Activated CD8-positive, alpha-beta T cell treated with anti-CD3 and anti-CD28 coated beads, Interleukin-2, amount 10 ng/mL, durations not matched to agents 7 days and 5 days (primary cell): ENCODE measurements at regions of chr12 and their contacts with region 1.

Region 1: DNA sequence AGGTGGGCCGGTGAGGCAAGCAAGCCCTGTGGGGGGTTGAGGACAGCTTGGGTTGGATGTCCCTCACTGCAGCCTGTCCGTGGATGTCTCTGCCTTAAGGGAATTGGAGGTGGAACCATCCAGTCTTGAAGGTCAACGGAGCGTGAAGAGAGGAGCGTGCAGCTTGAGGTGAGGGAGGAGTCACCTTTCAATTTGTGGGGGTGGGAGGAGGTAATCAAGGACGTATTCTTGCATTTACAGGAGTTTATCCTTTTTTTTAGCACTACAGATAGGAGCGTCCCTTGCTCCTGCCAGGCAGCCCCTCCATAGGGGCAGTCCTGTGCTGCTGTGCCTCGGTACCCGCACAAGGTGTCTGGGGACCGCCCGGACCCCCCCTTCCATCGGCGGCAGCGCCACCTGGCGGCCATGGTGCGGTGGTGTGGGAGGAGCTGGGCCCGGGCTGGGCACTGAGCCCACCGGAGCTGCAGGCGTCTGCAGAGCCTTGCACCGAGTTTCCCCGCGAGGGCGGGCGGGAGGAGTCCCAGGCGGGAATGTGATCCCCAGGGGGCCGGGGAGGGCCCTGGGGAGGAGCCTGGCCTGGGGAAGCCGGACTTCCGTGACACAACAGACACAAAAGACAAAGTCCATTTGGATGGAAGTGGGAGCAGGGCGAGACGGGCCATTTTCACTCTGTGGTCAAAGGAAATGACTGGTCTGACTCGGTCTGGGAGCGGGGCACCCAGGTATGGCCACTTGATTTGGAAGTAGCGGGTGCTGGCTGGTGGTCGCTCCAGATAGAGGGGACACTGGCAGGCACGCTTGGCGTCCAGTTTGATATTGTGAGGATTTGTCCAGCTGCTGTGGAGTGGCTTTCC is 923 bp downstream of the DNAJC22 start:
- DNase-seq: peak; percentile 81
- ATAC-seq: peak; percentile 87
- H3K4me3 Mint-ChIP-seq: peak overlapping the region; percentile 60
- H3K27ac Mint-ChIP-seq: no peak overlapping the region
- H3K4me1 Mint-ChIP-seq: peaks cover 36% of the 10 kb centered on the region
- H3K27me3 Mint-ChIP-seq: peaks cover 71% of the 10 kb centered on the region

Region 2: DNA sequence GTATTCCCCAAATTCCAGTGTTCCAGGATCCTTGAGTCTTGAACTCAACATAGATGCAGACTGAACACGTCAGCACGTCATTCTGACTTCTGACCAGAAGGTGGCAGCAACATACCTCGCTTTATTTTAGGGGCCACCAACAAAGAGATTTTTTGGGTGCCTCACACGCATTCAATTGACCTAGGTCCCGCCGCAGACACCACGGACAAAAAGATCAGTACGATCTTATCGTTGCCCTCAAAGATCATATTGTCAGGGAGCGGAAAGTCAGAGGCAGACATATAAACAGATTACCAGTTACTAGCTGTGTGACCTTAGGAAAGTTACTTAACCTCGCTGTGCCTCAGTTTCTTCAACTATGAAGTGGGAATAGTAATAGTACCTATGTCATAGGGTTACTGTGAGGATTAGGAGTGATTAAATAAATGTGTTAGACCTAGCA is 59.2 kb before region 1 on chr12:
- CTCF ChIA-PET with region 1: interaction called, 111 read pairs
- POLR2A ChIA-PET with region 1: no interaction called
- DNase-seq: peak; percentile 82
- ATAC-seq: peak; percentile 59
- H3K4me3 Mint-ChIP-seq: no peak overlapping the region
- H3K27ac Mint-ChIP-seq: no peak overlapping the region
- H3K4me1 Mint-ChIP-seq: peaks cover 5% of the 10 kb centered on the region
- H3K27me3 Mint-ChIP-seq: peaks cover 18% of the 10 kb centered on the region

Region 3: DNA sequence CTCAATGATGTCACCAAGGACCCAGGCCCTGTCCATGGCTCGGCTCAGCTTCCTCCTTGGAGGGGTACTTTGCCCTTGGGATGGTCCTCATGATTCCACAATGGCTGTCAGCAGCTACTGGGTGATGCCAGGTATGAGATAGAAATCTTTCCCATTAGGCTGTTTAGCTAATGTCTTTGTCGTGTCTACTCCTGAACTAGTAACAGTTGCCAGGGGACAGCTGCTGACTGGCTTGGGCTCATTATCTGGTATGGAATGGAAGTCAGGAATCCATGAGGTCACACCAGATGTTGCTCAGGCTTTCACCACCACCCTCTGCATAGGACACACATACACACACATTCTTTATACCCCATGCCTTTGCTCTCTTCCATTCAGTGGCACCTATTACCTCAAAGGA is 43.5 kb before region 1 on chr12:
- CTCF ChIA-PET with region 1: interaction called, 67 read pairs
- POLR2A ChIA-PET with region 1: no interaction called
- DNase-seq: no peak
- ATAC-seq: no peak
- H3K4me3 Mint-ChIP-seq: no peak overlapping the region
- H3K27ac Mint-ChIP-seq: no peak overlapping the region
- H3K4me1 Mint-ChIP-seq: peaks cover 5% of the 10 kb centered on the region
- H3K27me3 Mint-ChIP-seq: peaks cover 41% of the 10 kb centered on the region

Region 4: GRCh38 chr12:49322708-49323523 is 24.7 kb before region 1 on chr12 and contains the start of gene TROAP:
- CTCF ChIA-PET with region 1: interaction called, 43 read pairs
- POLR2A ChIA-PET with region 1: interaction called, 12 read pairs
- DNase-seq: peak; percentile 99
- ATAC-seq: peak; percentile 99
- H3K4me3 Mint-ChIP-seq: peak within 1 kb of the TSS; percentile 100
- H3K27ac Mint-ChIP-seq: peak within 1 kb of the TSS; percentile 99
- H3K4me1 Mint-ChIP-seq: peaks cover 32% of the 10 kb centered on the region
- H3K27me3 Mint-ChIP-seq: peaks cover 2% of the 10 kb centered on the region
- total RNA-seq, gene TROAP: 107 to 111 TPM

Region 5: GRCh38 chr12:49336645-49337584 is 10.7 kb before region 1 on chr12 and contains the start of gene C1QL4:
- CTCF ChIA-PET with region 1: interaction called, 37 read pairs
- POLR2A ChIA-PET with region 1: no interaction called
- DNase-seq: peak; percentile 88
- ATAC-seq: peak; percentile 81
- H3K4me3 Mint-ChIP-seq: peak within 1 kb of the TSS; percentile 53
- H3K27ac Mint-ChIP-seq: no peak within 1 kb of the TSS
- H3K4me1 Mint-ChIP-seq: peaks cover 19% of the 10 kb centered on the region
- H3K27me3 Mint-ChIP-seq: peaks cover 78% of the 10 kb centered on the region
- total RNA-seq, gene C1QL4: not detected

Region 6: GRCh38 chr12:49432616-49433015 is 85.0 kb after region 1 on chr12:
- CTCF ChIA-PET with region 1: no interaction called
- POLR2A ChIA-PET with region 1: no interaction called
- DNase-seq: no peak
- ATAC-seq: no peak
- H3K4me3 Mint-ChIP-seq: no peak overlapping the region
- H3K27ac Mint-ChIP-seq: no peak overlapping the region
- H3K4me1 Mint-ChIP-seq: no peaks in the 10 kb centered on the region
- H3K27me3 Mint-ChIP-seq: no peaks in the 10 kb centered on the region

Region 7: GRCh38 chr12:49515266-49515665 is 167.7 kb after region 1 on chr12:
- CTCF ChIA-PET with region 1: interaction called, 68 read pairs
- POLR2A ChIA-PET with region 1: interaction called, 3 read pairs
- DNase-seq: no peak
- ATAC-seq: no peak
- H3K4me3 Mint-ChIP-seq: no peak overlapping the region
- H3K27ac Mint-ChIP-seq: no peak overlapping the region
- H3K4me1 Mint-ChIP-seq: no peaks in the 10 kb centered on the region
- H3K27me3 Mint-ChIP-seq: no peaks in the 10 kb centered on the region